Right ventricle myocardium superior (tissue), 1 donor: ENCODE measurements at regions of chr2 and their contacts with region 1.

Region 1: GRCh38 chr2:183038341-183039300 is at the start of gene NCKAP1:
- DNase-seq: peak; percentile 95
- ATAC-seq: peak; percentile 92
- total RNA-seq, gene NCKAP1: 128 TPM

Region 2: DNA sequence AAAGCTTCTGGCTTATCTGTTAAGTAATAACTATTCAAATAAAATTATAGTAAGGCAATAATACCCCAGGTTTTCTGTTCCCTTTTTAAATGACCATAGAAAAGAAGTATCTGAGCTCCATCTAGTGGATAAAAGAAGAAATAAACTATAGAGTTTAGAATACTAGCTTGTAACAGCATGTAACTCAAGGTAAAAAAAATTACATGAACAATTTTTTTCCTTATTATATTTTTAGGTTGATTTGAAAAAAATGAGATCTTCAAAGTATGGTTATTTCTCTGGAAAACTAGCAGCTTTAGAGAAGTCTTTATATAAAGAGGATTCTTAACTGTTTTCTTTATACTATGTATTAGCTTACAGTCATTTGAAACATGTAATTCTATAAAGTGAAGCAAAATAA is 58.5 kb before region 1 on chr2:
- intact Hi-C with region 1: no loop called
- DNase-seq: no peak
- ATAC-seq: peak; percentile 75

Region 3: GRCh38 chr2:182999348-183000028 is 39.1 kb before region 1 on chr2:
- intact Hi-C with region 1: loop called (anchors 5 kb)
- DNase-seq: no peak
- ATAC-seq: no peak

Region 4: GRCh38 chr2:183072177-183072576 is 33.6 kb after region 1 on chr2:
- intact Hi-C with region 1: loop called (anchors 2 kb)
- DNase-seq: no peak
- ATAC-seq: no peak